ENCODE measurements at regions of chr7 and their contacts with region 1.

Region 1: GRCh38 chr7:65872776-65873581 is at the start of gene VKORC1L1:
- DNase-seq: peak; percentile 95
- H3K4me3 Mint-ChIP-seq: peak within 1 kb of the TSS; percentile 78
- H3K27ac Mint-ChIP-seq: no peak within 1 kb of the TSS
- H3K4me1 Mint-ChIP-seq: peaks cover 6% of the 10 kb centered on the region
- H3K27me3 Mint-ChIP-seq: no peaks in the 10 kb centered on the region
- total RNA-seq, gene VKORC1L1: 8.9 to 10.1 TPM

Region 2: DNA sequence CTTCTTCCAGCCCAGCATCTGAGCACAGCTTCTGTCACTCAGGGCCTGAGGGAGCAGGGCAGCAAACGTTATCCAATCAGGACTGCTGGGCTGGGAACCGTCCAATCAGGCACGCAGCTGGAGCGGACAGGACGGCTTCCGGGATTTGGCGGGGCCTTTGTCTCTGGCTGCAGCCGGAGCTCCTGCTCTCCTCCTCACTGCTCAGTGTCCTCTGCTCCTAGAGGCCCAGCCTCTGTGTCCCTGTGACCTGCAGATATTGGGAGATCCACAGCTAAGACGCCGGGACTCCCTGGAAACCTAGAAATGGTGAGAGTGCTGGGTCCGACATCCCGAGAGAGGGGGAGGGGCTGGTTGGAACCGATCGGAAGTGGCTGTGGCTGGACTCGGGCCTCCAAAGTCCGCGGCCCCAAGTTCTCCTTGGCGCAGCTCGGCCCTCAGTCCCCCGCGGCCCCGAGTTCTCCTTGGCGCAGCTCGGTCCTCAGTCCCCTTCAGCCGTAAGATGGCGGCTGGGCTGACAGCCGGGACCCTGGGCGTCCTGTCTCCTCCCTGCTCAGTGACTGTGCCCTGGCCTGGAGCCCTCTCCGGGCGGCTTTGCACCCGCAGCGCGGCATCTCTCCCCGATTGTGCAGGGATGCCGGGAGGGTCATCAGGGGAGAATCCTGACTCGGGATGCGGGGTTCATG is 1206.9 kb before region 1 on chr7 and contains the start of gene ZNF107:
- CTCF ChIA-PET with region 1: no interaction called
- intact Hi-C with region 1: loop called (anchors 2 kb)
- DNase-seq: peak; percentile 93
- H3K4me3 Mint-ChIP-seq: peak within 1 kb of the TSS; percentile 95
- H3K27ac Mint-ChIP-seq: peak within 1 kb of the TSS; percentile 96
- H3K4me1 Mint-ChIP-seq: peaks cover 47% of the 10 kb centered on the region
- H3K27me3 Mint-ChIP-seq: no peaks in the 10 kb centered on the region
- total RNA-seq, gene ZNF107: 7.7 to 8.0 TPM

Region 3: DNA sequence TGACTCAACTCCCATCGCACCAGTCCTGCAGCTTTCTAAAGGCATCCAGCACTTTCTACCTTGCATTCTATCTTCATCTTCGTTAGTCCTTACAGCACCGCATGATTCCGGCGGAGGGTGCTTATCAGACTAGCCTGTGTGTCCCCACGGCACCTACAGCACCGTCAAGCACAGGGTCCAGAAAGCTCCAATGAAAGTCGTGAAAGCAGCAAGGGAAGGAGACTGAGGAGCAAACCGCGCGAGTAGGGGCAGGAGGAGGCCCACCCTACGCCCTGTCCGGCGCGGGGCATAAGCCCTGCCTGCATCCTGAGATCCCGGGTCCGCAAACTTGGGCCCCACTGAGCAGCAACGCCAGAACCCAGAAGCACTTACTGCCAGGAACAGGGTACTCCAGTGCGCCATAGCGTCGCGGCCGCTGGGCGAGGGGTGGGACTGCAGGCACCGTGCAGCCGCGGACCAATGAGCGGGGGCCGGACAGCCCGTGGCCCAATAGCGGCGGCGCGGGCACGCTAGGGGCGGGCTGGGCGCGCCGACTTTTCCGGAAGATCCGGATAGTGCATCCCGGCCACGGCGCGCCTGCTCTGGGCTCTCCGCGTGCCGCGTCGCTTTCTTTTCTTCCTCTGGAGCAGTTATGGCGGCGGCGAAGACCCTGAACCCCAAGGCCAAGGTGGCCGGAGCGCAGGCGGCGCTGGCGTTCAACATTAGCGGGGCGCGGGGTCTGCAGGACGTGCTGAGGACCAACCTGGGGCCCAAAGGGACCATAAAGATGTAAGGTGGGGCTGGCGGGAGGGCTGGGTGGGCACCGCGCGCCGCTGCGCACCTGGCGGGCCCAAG is 122.3 kb before region 1 on chr7:
- CTCF ChIA-PET with region 1: no interaction called
- intact Hi-C with region 1: loop called (anchors 1 kb)
- DNase-seq: peak; percentile 89
- H3K4me3 Mint-ChIP-seq: peak overlapping the region; percentile 84
- H3K27ac Mint-ChIP-seq: peak overlapping the region; percentile 98
- H3K4me1 Mint-ChIP-seq: peaks cover 40% of the 10 kb centered on the region
- H3K27me3 Mint-ChIP-seq: no peaks in the 10 kb centered on the region

Region 4: GRCh38 chr7:65840446-65840845 is 32.5 kb before region 1 on chr7:
- CTCF ChIA-PET with region 1: no interaction called
- intact Hi-C with region 1: no loop called
- DNase-seq: peak; percentile 48
- H3K4me3 Mint-ChIP-seq: no peak overlapping the region
- H3K27ac Mint-ChIP-seq: no peak overlapping the region
- H3K4me1 Mint-ChIP-seq: peaks cover under 1% of the 10 kb centered on the region
- H3K27me3 Mint-ChIP-seq: no peaks in the 10 kb centered on the region

Region 5: GRCh38 chr7:65981965-65982792 is 109.2 kb after region 1 on chr7 and contains the start of gene GUSB:
- CTCF ChIA-PET with region 1: no interaction called
- intact Hi-C with region 1: loop called (anchors 1 kb)
- DNase-seq: peak; percentile 93
- H3K4me3 Mint-ChIP-seq: peak within 1 kb of the TSS; percentile 87
- H3K27ac Mint-ChIP-seq: peak within 1 kb of the TSS; percentile 78
- H3K4me1 Mint-ChIP-seq: peaks cover 8% of the 10 kb centered on the region
- H3K27me3 Mint-ChIP-seq: no peaks in the 10 kb centered on the region
- total RNA-seq, gene GUSB: 42.8 to 44.0 TPM

Region 6: DNA sequence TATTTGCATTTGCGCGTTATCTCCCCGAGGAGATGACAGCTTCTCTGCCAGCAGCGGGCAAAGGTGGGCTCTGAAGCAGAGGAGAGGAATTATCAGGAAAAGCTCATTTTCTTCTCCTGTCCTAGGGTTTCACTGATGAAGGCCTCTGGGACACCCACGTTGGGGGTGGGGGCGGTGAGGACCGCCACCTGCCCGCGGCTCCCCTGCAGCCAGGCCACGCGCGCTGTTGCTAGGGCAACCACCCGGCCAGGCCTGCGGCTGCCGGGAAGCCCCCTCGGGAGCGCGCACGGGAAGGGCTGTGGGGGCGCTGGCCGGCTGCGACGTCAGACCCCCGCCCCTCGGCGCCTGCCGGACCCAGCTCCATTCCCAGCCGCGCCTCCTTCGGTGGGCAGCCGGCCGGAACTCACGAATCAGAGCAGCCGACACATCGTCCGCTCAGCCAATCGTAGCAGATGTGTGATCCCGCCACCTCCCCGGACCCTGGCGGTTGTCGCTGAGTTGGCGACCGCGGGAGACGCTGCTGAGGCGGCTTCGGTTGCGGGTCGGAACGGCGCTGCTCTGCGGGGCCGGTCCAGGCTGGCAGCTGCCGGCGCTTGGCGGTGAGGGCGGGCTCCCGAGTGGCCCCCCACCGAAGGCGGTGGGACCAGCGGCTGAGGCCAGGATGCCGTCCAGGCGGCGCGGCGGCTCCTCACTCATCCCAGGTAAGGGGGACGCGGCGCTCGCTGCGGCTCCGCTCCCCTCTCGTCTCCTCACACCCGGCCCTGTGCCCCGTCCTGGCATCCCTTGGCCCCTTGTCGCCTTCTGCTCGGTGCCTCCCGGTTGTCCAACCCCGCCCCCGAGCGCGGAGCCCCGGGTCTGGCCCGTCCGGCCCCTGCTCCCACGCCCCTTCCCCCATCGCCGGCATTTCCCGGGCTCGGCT is 332.1 kb after region 1 on chr7 and contains the start of gene TPST1:
- CTCF ChIA-PET with region 1: no interaction called
- intact Hi-C with region 1: loop called (anchors 5 kb)
- DNase-seq: peak; percentile 84
- H3K4me3 Mint-ChIP-seq: peak within 1 kb of the TSS; percentile 88
- H3K27ac Mint-ChIP-seq: no peak within 1 kb of the TSS
- H3K4me1 Mint-ChIP-seq: peaks cover 29% of the 10 kb centered on the region
- H3K27me3 Mint-ChIP-seq: peaks cover 13% of the 10 kb centered on the region
- total RNA-seq, gene TPST1: 1.9 to 3.8 TPM

Region 7: DNA sequence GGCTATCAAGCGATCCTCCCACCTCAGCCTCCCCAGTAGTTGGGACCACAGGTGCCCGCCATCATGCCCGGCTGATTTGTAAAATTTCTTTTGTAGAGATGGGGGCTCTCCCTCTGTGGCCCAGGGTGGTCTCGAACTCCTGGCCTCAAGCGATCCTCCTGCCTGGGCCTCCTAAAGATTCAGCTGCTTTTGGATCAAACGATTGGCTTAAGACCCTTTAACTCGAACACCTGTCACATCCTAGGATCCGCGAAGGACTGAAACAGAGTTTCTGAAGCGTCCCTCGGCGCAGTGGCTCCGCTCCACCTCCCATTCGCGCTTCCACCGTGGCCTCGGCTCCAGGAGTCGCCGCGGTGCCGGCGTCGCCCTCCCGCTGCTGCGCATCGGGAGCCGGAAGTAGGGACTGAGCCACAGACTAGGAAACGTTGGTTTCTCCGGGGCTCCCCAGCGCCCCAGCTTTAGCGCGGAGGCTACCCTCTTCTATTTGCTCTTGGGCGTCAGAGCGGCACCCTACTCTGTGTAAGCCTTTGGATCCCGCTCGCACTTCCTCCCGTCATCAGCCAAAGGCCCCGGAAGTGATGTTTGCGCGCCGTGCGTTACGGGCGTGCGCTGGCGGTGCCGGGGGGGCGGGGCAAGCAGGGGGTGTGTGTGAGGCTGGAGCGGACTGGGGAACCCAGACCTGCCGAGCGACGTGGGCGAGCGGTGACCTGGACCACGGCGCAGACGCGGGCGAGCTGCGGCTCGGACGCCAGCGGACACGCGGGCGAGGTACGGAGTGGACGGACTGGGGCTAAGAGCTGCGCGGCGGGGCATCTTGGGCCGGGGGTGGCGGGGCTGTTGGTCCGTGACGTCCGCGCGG is 808.7 kb after region 1 on chr7:
- CTCF ChIA-PET with region 1: no interaction called
- intact Hi-C with region 1: loop called (anchors 10 kb)
- DNase-seq: peak; percentile 95
- H3K4me3 Mint-ChIP-seq: peak overlapping the region; percentile 87
- H3K27ac Mint-ChIP-seq: peak overlapping the region; percentile 89
- H3K4me1 Mint-ChIP-seq: peaks cover 29% of the 10 kb centered on the region
- H3K27me3 Mint-ChIP-seq: no peaks in the 10 kb centered on the region

Region 8: DNA sequence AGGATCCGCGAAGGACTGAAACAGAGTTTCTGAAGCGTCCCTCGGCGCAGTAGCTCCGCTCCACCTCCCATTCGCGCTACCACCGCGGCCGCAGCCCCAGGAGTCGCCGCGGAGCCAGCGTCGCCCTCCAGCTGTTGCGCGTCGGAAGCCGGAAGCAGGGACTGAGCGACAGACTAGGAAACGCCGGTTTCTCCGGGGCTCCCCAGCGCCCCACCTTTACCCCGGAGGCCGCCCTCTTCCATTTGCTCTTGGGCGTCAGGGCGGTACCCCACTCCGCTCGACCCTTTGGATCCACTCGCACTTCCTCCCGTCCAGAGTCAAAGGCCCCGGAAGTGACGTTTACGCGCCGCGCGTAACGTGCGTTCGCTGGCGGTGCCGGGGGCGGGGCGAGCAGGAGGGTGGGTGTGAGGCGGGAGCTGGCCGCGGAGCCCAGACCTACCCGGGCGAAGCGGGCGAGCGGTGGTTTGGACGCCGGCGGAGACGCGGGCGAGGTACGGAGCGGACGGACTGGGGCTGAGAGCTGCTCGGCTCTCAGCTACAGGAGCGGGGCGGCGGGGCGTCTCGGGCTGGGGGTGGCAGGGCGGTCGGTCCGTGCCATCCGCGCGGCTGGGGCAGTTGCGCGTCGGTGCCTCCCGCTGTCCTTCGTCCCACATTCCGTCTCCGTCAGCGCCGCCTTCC is 867.5 kb after region 1 on chr7 and contains the start of gene RABGEF1:
- CTCF ChIA-PET with region 1: no interaction called
- intact Hi-C with region 1: loop called (anchors 2 kb)
- DNase-seq: peak; percentile 97
- H3K4me3 Mint-ChIP-seq: peak within 1 kb of the TSS; percentile 92
- H3K27ac Mint-ChIP-seq: peak within 1 kb of the TSS; percentile 92
- H3K4me1 Mint-ChIP-seq: peaks cover 47% of the 10 kb centered on the region
- H3K27me3 Mint-ChIP-seq: no peaks in the 10 kb centered on the region
- total RNA-seq, gene RABGEF1: 10.7 to 10.8 TPM